Naive thymus-derived CD4-positive, alpha-beta T cell (primary cell): ENCODE measurements at regions of chr1 and their contacts with region 1.

Region 1: DNA sequence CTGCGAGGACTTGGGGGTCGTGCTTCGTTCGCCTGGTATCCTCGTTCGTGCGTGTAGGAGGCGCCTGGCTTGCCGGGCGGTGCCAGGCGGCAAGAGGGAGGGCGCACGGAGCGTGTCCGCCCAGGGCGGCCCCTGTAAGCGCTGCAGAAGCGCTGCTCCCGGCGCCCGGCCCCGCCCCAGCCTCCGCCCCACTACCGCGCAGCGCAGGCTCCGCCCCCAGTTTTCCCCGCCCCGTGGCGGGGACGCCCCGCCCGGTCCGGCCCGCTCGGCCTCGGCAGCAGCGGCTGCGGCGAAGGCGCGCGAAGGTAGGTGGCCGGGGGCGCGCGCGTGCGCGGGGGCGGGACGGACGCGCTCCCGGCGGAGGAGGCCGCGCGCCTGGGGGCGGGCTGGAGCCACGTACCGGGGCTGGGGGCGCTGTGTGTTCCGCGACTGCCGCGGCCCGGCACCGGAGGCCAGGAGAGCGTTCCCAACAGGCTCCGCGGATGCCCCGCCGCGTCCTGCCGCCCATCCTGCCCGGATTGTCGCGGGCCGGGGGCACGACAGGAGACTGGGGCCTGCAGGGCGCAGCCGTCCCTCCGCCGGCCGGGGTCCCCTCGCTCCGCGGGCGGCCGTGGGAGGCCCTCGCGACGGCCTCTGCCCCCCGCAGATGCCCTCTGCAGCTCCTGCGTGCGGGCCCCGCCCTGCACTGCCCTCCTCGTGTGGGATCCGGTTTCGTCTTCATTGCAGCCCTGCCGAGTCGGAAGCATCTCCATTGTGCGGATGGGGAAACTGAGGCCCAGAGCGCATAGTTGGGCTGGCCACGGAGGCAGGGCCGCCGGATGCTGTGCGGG is 7.7 kb upstream of the CROCC start:
- DNase-seq: peak; percentile 82 to 100 (median 90)
- ATAC-seq: peak; percentile 98
- H3K4me3 ChIP-seq: peak overlapping the region; percentile 94
- H3K4me3 Mint-ChIP-seq: peak overlapping the region; percentile 82 to 92 (median 88)
- H3K27ac ChIP-seq: peak overlapping the region; percentile 82
- H3K27ac Mint-ChIP-seq: peak overlapping the region; percentile 72 to 91 (median 87)
- H3K4me1 ChIP-seq: peaks cover 10 to 11% of the 10 kb centered on the region in 2 donors
- H3K4me1 Mint-ChIP-seq: peaks cover 33 to 49% (median 44%) of the 10 kb centered on the region in 7 donors
- H3K27me3 ChIP-seq: no peaks in the 10 kb centered on the region
- H3K27me3 Mint-ChIP-seq: peaks cover 0 to 10% (median 0%) of the 10 kb centered on the region in 5 donors

Region 2: DNA sequence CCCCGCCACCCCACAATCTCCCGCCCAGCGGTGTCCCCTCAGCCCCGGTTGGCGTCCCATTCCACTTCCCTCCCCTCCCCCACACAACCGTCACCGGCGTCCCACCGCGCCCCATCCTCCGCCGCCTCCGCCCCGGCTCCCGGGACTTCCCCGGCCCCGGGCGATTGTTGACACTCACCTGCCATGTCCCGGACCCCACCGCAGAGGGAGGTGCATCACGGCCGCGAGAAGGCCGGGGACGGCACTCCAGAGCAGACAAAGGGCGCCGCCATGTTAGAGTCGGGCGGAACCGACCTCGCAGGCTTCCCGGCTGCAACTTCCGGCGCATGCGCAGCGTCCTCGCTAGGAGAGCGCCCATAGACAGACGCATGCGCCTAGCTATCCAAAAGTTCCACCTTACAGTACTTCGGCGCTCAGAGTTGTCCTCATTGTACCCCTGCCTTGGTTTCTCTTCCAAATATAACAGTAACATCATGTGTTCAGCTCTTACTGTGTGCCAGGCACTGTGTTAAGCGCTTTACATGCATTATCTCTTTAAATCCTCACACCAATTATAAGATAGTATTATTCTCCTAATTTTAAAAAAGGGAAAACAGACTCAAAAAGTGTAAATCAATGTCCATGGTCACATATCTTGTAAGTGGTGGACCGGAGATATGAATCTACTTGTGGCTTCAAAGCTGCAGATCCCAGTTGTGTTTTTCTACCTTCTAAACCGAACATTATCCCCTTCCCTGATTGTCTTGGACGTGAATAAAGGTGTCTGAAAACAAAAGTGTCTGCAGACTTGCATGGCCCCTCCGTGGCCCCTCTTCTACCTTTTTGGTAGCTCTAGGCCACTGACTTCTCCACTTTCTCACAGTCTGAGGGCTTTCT is 938.0 kb before region 1 on chr1 and contains the start of gene ZBTB17:
- CTCF ChIA-PET with region 1: no interaction called
- POLR2A ChIA-PET with region 1: no interaction called
- intact Hi-C with region 1: loop called in 1 of 2 experiments (anchors 10 kb)
- DNase-seq: peak; percentile 90 to 95 (median 94)
- ATAC-seq: peak; percentile 96
- H3K4me3 ChIP-seq: peak within 1 kb of the TSS; percentile 76
- H3K4me3 Mint-ChIP-seq: peak within 1 kb of the TSS; percentile 82 to 94 (median 90)
- H3K27ac ChIP-seq: peak within 1 kb of the TSS; percentile 83
- H3K27ac Mint-ChIP-seq: peak within 1 kb of the TSS; percentile 82 to 95 (median 92)
- H3K4me1 ChIP-seq: peaks cover 12 to 17% of the 10 kb centered on the region in 2 donors
- H3K4me1 Mint-ChIP-seq: peaks cover 21 to 46% (median 38%) of the 10 kb centered on the region in 7 donors
- H3K27me3 ChIP-seq: no peaks in the 10 kb centered on the region
- H3K27me3 Mint-ChIP-seq: no peaks in the 10 kb centered on the region
- total RNA-seq, gene ZBTB17: 47.3 to 85.1 (median 65.0) TPM

Region 3: GRCh38 chr1:16498573-16499413 is 415.3 kb before region 1 on chr1:
- CTCF ChIA-PET with region 1: no interaction called
- POLR2A ChIA-PET with region 1: no interaction called
- intact Hi-C with region 1: loop called in 1 of 2 experiments (anchors 5 kb)
- DNase-seq: peak; percentile 64 to 91 (median 74)
- ATAC-seq: peak; percentile 94
- H3K4me3 ChIP-seq: peak overlapping the region; percentile 83
- H3K4me3 Mint-ChIP-seq: peak overlapping the region; percentile 83 to 95 (median 88)
- H3K27ac ChIP-seq: peak overlapping the region; percentile 56
- H3K27ac Mint-ChIP-seq: peak overlapping the region in 6 of 9 donors; percentile 38 to 85 (median 78)
- H3K4me1 ChIP-seq: no peaks in the 10 kb centered on the region
- H3K4me1 Mint-ChIP-seq: peaks cover 9 to 27% (median 20%) of the 10 kb centered on the region in 7 donors
- H3K27me3 ChIP-seq: no peaks in the 10 kb centered on the region
- H3K27me3 Mint-ChIP-seq: peaks cover 0 to 9% (median 0%) of the 10 kb centered on the region in 5 donors

Region 4: DNA sequence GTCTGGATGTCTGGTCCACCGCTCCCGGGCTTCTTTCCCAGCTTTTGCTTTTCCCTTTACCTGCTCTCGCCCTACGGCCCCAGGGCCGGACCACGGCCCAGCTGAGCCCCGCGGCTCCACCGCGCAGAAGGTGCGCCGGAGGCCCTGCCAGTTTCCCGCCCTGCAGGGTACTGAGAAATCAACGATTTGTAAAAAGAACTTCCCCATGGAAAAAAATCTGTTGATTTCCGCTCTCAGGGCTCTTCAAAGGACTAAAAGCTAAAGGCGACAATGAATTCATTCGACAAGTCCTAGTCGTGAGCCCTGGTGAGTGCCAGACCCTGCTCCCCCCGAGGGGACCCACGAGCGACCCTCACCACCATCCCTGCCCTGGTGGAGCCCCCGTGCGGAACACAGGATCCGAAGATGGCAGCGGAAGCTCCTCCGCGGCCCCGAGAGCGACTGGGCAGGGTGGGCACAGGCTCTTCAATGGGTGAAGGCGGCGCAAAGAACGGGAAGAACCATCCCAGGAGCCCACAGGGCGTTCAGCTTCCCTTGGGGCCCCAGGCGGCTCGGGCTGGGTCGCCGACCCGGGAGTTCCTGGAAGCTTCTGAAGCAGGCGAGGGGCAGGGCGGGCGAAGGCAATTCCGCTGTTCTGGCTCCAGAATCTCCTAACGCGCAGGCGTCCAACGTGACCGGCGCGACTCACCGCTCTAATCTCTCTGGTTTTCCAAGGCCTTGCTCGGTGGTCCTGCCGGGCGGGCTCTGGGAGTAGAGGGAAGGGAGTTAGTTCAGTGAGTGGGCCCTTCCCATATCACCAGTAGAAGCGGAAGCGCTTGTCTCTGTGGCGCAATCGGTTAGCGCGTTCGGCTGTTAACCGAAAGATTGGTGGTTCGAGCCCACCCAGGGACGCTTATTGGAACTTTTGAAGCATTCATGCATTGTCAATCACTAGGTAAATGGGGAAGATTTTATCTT is 24.9 kb before region 1 on chr1:
- CTCF ChIA-PET with region 1: no interaction called
- POLR2A ChIA-PET with region 1: interaction called, 3 read pairs
- intact Hi-C with region 1: loop called in 1 of 2 experiments (anchors 1 kb)
- DNase-seq: peak in 8 of 9 donors; percentile 35 to 67 (median 56)
- ATAC-seq: peak; percentile 77
- H3K4me3 ChIP-seq: peak overlapping the region; percentile 79
- H3K4me3 Mint-ChIP-seq: peak overlapping the region; percentile 89 to 99 (median 96)
- H3K27ac ChIP-seq: peak overlapping the region; percentile 70
- H3K27ac Mint-ChIP-seq: peak overlapping the region in 8 of 9 donors; percentile 91 to 98 (median 96)
- H3K4me1 ChIP-seq: peaks cover 4 to 9% of the 10 kb centered on the region in 2 donors
- H3K4me1 Mint-ChIP-seq: peaks cover 7 to 34% (median 28%) of the 10 kb centered on the region in 7 donors
- H3K27me3 ChIP-seq: no peaks in the 10 kb centered on the region
- H3K27me3 Mint-ChIP-seq: peaks cover 0 to 88% (median 0%) of the 10 kb centered on the region in 5 donors

Region 5: GRCh38 chr1:17011439-17012307 is 97.6 kb after region 1 on chr1 and contains the start of gene ATP13A2:
- CTCF ChIA-PET with region 1: no interaction called
- POLR2A ChIA-PET with region 1: no interaction called
- intact Hi-C with region 1: loop called in 1 of 2 experiments (anchors 5 kb)
- DNase-seq: peak; percentile 76 to 87 (median 82)
- ATAC-seq: peak; percentile 99
- H3K4me3 ChIP-seq: peak within 1 kb of the TSS; percentile 72
- H3K4me3 Mint-ChIP-seq: peak within 1 kb of the TSS; percentile 81 to 91 (median 86)
- H3K27ac ChIP-seq: peak within 1 kb of the TSS; percentile 72
- H3K27ac Mint-ChIP-seq: peak within 1 kb of the TSS; percentile 23 to 83 (median 75)
- H3K4me1 ChIP-seq: peaks cover 15 to 16% of the 10 kb centered on the region in 2 donors
- H3K4me1 Mint-ChIP-seq: peaks cover 9 to 27% (median 17%) of the 10 kb centered on the region in 7 donors
- H3K27me3 ChIP-seq: no peaks in the 10 kb centered on the region
- H3K27me3 Mint-ChIP-seq: peaks cover 0 to 2% (median 0%) of the 10 kb centered on the region in 5 donors
- total RNA-seq, gene ATP13A2: 32.9 to 57.4 (median 42.1) TPM

Region 6: DNA sequence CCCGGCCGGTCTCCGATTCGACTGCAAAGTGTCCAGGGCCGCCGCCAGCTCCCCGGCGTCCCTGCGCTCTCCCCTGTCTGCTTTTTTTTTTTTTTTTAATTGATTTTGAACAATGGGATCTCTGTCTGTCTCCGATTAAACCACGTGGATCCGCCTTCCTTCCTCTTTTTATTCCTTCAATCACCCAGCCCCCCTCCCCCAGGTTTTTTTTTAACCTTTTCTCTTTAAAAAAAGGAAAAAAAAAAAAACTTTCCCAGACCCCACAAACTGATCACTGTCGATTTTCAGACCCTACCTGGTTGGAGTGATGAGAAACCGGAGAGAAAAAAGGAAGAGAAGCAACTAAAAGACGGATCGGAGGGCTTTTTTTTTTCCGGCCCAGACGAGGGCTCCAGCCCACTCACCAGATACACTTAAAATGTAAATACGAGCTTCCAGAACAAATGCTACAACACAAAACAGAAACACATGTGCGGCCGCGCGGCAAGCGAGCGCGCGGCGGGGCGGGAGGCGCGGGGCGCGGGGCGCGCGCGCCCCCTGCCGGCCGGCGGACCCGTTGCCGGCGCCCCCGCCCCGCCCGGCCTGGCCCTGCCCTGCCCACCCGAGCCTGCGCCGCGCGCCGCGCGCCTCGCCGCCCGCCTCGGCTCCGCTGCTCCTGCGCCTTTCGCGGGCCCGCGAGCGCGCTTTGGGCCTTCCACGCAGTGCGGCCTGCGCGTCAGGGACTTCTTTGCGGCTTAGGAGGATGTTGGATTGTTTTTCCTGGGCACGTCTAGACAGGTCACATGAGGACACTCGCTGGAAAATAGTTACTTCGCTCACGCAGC is 525.4 kb after region 1 on chr1 and contains the start of gene RCC2:
- CTCF ChIA-PET with region 1: no interaction called
- POLR2A ChIA-PET with region 1: no interaction called
- intact Hi-C with region 1: loop called in 1 of 2 experiments (anchors 5 kb)
- DNase-seq: peak; percentile 63 to 80 (median 74)
- ATAC-seq: peak; percentile 91
- H3K4me3 ChIP-seq: peak within 1 kb of the TSS; percentile 94
- H3K4me3 Mint-ChIP-seq: peak within 1 kb of the TSS; percentile 92 to 99 (median 96)
- H3K27ac ChIP-seq: peak within 1 kb of the TSS; percentile 86
- H3K27ac Mint-ChIP-seq: peak within 1 kb of the TSS; percentile 87 to 98 (median 96)
- H3K4me1 ChIP-seq: peaks cover 14 to 19% of the 10 kb centered on the region in 2 donors
- H3K4me1 Mint-ChIP-seq: peaks cover 17 to 54% (median 43%) of the 10 kb centered on the region in 7 donors
- H3K27me3 ChIP-seq: no peaks in the 10 kb centered on the region
- H3K27me3 Mint-ChIP-seq: no peaks in the 10 kb centered on the region
- total RNA-seq, gene RCC2: 42.1 to 130 (median 46.0) TPM